Stomach (tissue), 19 donors: ENCODE measurements at regions of chr5 and their contacts with region 1.

Region 1: GRCh38 chr5:134184155-134185135 is 7.7 kb upstream of the SKP1 start:
- DNase-seq: peak; percentile 78 to 86
- H3K4me3 ChIP-seq: no peak overlapping the region
- H3K27ac ChIP-seq: no peak overlapping the region
- H3K4me1 ChIP-seq: peaks cover 13 to 26% (median 20%) of the 10 kb centered on the region in 4 donors
- H3K27me3 ChIP-seq: no peaks in the 10 kb centered on the region
- CTCF ChIP-seq: peak in 5 of 7 experiments; percentile 84 to 93 (median 86)
- EP300 ChIP-seq: no peak
- POLR2A ChIP-seq: no peak

Region 2: DNA sequence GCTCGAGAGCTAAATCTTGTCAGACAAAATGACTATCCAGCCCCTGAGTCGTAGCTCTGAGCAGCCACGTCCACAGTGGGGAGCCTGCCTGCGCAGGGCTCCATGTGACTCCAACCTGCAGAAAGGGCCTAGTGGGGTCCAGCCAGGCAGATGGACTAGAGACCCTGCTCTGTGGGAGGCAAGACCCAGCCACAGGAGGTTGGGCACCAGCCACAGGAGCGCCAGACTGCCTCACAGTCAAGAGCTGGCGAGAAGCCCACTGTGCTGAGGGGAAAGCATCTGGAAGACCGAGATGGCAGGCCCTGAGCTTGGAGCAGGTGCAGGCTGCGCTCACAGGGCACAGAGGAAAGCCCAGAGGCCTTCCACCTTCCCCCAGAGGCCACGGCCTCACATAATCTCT is 277.4 kb before region 1 on chr5:
- intact Hi-C with region 1: no loop called
- DNase-seq: peak; percentile 59 to 71
- H3K4me3 ChIP-seq: no peak overlapping the region
- H3K27ac ChIP-seq: no peak overlapping the region
- H3K4me1 ChIP-seq: peaks cover 0 to 6% (median 0%) of the 10 kb centered on the region in 4 donors
- H3K27me3 ChIP-seq: no peaks in the 10 kb centered on the region
- CTCF ChIP-seq: no peak
- EP300 ChIP-seq: no peak
- POLR2A ChIP-seq: no peak

Region 3: GRCh38 chr5:134070725-134071613 is 113.5 kb before region 1 on chr5:
- intact Hi-C with region 1: no loop called
- DNase-seq: peak; percentile 55 to 81
- H3K4me3 ChIP-seq: peak overlapping the region; percentile 37 to 48 (median 41)
- H3K27ac ChIP-seq: no peak overlapping the region
- H3K4me1 ChIP-seq: peaks cover 11 to 19% (median 12%) of the 10 kb centered on the region in 4 donors
- H3K27me3 ChIP-seq: peaks cover 0 to 39% (median 10%) of the 10 kb centered on the region in 3 donors
- CTCF ChIP-seq: no peak
- EP300 ChIP-seq: no peak
- POLR2A ChIP-seq: no peak

Region 4: GRCh38 chr5:134289509-134290113 is 105.2 kb after region 1 on chr5:
- intact Hi-C with region 1: loop called (anchors 5 kb)
- DNase-seq: peak; percentile 42 to 90
- H3K4me3 ChIP-seq: no peak overlapping the region
- H3K27ac ChIP-seq: no peak overlapping the region
- H3K4me1 ChIP-seq: no peaks in the 10 kb centered on the region
- H3K27me3 ChIP-seq: no peaks in the 10 kb centered on the region
- CTCF ChIP-seq: peak in 5 of 7 experiments; percentile 36 to 85 (median 68)
- EP300 ChIP-seq: no peak
- POLR2A ChIP-seq: no peak

Region 5: GRCh38 chr5:134541736-134542376 is 357.4 kb after region 1 on chr5:
- intact Hi-C with region 1: no loop called
- DNase-seq: peak; percentile 48 to 85
- H3K4me3 ChIP-seq: no peak overlapping the region
- H3K27ac ChIP-seq: no peak overlapping the region
- H3K4me1 ChIP-seq: peaks cover 15 to 47% (median 35%) of the 10 kb centered on the region in 4 donors
- H3K27me3 ChIP-seq: no peaks in the 10 kb centered on the region
- CTCF ChIP-seq: no peak
- EP300 ChIP-seq: no peak
- POLR2A ChIP-seq: no peak

Region 6: GRCh38 chr5:134592141-134592746 is 407.8 kb after region 1 on chr5:
- intact Hi-C with region 1: loop called (anchors 10 kb)
- DNase-seq: peak in 1 of 2 donors; percentile 60
- H3K4me3 ChIP-seq: no peak overlapping the region
- H3K27ac ChIP-seq: peak overlapping the region; percentile 26 to 76 (median 46)
- H3K4me1 ChIP-seq: peaks cover 0 to 18% (median 16%) of the 10 kb centered on the region in 4 donors
- H3K27me3 ChIP-seq: no peaks in the 10 kb centered on the region
- CTCF ChIP-seq: no peak
- EP300 ChIP-seq: no peak
- POLR2A ChIP-seq: no peak